HCT116 (cell line): ENCODE measurements at regions of chr13 and their contacts with region 1.

Region 1: DNA sequence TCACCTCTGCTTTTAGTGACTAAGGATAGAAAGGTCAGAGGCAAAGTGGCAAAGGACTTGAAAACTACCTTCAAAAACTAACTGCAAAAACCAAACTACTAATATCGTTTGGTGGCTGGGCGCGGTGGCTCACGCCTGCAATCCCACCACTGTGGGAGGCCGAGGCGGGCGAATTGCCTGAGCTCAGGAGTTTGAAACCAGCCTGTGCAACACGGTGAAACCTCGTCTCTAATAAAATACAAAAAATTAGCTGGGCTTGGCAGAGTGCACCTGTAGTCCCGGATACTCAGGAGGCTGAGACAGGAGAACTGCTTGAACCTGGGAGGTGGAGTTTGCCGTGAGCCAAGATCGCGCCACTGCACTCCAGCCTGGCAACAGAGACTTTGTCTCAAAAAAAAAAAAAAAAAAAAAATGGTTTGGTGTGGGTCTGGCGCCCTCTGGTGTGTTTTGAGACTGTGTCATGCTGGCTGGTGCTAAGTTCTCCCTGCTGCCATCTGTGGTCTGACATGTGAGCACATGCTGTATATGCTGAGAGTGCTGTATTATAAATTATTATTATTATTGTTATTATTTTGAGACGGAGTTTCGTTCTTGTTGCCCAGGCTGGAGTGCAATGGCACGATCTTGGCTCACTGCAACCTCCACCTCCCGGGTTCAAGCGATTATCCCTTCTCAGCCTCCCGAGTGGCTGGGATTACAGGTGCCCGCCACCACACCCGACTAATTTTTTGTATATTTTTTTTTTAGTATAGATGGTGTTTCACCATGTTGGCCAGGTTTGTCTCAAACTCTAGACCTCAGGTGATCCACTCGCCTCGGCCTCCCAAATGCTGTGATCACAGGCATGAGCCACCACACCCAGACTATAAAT is 36.0 kb upstream of the RNF17 start:
- DNase-seq: peak; percentile 85
- ATAC-seq: peak; percentile 100
- H3K4me3 ChIP-seq: no peak overlapping the region
- H3K27ac ChIP-seq: no peak overlapping the region
- H3K4me1 ChIP-seq: peaks cover 0 to 3% of the 10 kb centered on the region in 2 experiments; a peak in 1 of 4 replicates
- H3K27me3 ChIP-seq: no peaks in the 10 kb centered on the region
- CTCF ChIP-seq: peak; percentile 67 to 96 (median 80)
- POLR2A ChIP-seq: no peak
- RAD21 ChIP-seq: peak; percentile 81

Region 2: DNA sequence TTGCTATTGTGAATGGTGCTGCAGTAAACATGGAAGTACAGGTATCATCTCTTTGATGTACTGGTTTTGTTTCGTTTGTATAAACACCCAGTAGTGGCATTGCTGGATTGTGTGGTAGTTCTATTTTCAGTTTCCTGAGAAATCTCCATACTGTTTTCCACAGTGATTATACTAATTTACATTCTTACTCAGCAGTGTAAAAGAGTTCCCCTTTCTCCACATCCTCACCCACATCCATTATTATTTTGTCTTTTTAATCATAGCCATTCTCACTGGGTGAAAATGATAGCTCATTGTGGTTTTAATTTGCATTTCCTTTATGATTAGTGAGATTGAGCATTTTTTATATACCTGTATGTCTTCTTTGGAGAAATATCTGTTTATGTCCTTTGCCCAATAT is 153.1 kb before region 1 on chr13:
- CTCF ChIA-PET with region 1: no interaction called
- POLR2A ChIA-PET with region 1: no interaction called
- RAD21 ChIA-PET with region 1: no interaction called
- intact Hi-C with region 1: loop called (anchors 5 kb)
- DNase-seq: no peak
- ATAC-seq: no peak
- H3K4me3 ChIP-seq: no peak overlapping the region
- H3K27ac ChIP-seq: no peak overlapping the region
- H3K4me1 ChIP-seq: no peaks in the 10 kb centered on the region
- H3K27me3 ChIP-seq: no peaks in the 10 kb centered on the region
- CTCF ChIP-seq: no peak
- POLR2A ChIP-seq: no peak
- RAD21 ChIP-seq: no peak

Region 3: DNA sequence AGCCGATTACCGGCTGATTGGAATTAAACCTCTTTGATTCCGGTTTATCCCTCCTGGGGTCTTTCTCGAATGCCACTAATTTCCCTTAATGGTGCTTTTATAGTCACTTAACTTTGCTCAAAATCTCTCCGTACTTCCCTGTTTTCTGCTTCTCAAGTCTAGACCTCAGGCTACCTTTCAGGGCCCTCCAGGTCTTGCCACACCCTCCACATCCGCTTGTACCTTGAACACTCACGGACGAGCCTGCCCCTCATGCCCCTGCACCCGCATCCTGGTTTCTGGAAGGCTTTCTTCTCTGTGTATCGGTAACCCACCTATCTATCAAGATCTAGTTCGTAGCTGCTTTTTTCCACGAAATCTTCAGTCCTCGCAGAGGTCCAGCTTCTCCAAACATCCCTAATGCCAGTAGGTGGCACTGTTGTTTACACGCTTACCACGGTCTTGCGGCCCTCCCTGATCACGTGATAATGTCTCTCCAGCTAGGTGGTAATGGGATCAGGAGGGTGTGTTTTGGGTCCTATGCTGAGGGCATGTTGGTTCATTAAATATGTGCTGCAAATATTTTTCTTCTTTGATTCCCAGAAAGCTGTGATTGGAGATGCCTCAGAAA is 34.0 kb before region 1 on chr13:
- CTCF ChIA-PET with region 1: interaction called, 20 read pairs
- POLR2A ChIA-PET with region 1: no interaction called
- RAD21 ChIA-PET with region 1: interaction called in 1 of 2 experiments, 6 read pairs
- intact Hi-C with region 1: loop called (anchors 5 kb)
- DNase-seq: peak; percentile 74
- ATAC-seq: peak; percentile 99
- H3K4me3 ChIP-seq: peak overlapping the region in 1 of 2 experiments; percentile 32; a peak in 2 of 4 replicates
- H3K27ac ChIP-seq: no peak overlapping the region
- H3K4me1 ChIP-seq: peaks cover 0 to 4% of the 10 kb centered on the region in 2 experiments; a peak in 3 of 4 replicates
- H3K27me3 ChIP-seq: peaks cover 1% of the 10 kb centered on the region; the same call in 1 of the 2 replicates
- CTCF ChIP-seq: peak; percentile 69 to 88 (median 82)
- POLR2A ChIP-seq: no peak
- RAD21 ChIP-seq: peak; percentile 69